Gastrocnemius medialis (tissue), 4 donors: ENCODE measurements at regions of chr2 and their contacts with region 1.

Region 1: GRCh38 chr2:97995734-97996624 is at the start of gene TMEM131:
- DNase-seq: peak; percentile 88 to 91
- ATAC-seq: peak; percentile 91 to 92
- H3K4me3 ChIP-seq: peak within 1 kb of the TSS; percentile 72 to 97 (median 80)
- H3K27ac ChIP-seq: peak within 1 kb of the TSS; percentile 90 to 100 (median 96)
- H3K4me1 ChIP-seq: peaks cover 36 to 44% of the 10 kb centered on the region in 2 donors
- H3K27me3 ChIP-seq: no peaks in the 10 kb centered on the region
- CTCF ChIP-seq: no peak
- POLR2A ChIP-seq: peak; percentile 68 to 82
- total RNA-seq, gene TMEM131: 10.3 to 39.2 (median 20.0) TPM

Region 2: GRCh38 chr2:97870396-97870843 is 125.6 kb before region 1 on chr2:
- in situ Hi-C with region 1: no loop called
- intact Hi-C with region 1: loop called (anchors 2 kb)
- DNase-seq: peak; percentile 60 to 63
- ATAC-seq: peak; percentile 85 to 90
- H3K4me3 ChIP-seq: peak overlapping the region in 3 of 4 donors; percentile 16 to 31 (median 30)
- H3K27ac ChIP-seq: peak overlapping the region; percentile 88 to 95 (median 92)
- H3K4me1 ChIP-seq: peaks cover 58 to 65% of the 10 kb centered on the region in 2 donors
- H3K27me3 ChIP-seq: no peaks in the 10 kb centered on the region
- CTCF ChIP-seq: no peak
- POLR2A ChIP-seq: peak in 1 of 2 donors; percentile 18

Region 3: GRCh38 chr2:98036349-98037000 is 40.5 kb after region 1 on chr2:
- in situ Hi-C with region 1: no loop called
- intact Hi-C with region 1: loop called (anchors 1 kb)
- DNase-seq: peak; percentile 86 to 90
- ATAC-seq: peak; percentile 94
- H3K4me3 ChIP-seq: peak overlapping the region in 1 of 4 donors; percentile 27
- H3K27ac ChIP-seq: peak overlapping the region; percentile 67 to 77 (median 72)
- H3K4me1 ChIP-seq: peaks cover 39 to 40% of the 10 kb centered on the region in 2 donors
- H3K27me3 ChIP-seq: no peaks in the 10 kb centered on the region
- CTCF ChIP-seq: no peak
- POLR2A ChIP-seq: no peak

Region 4: GRCh38 chr2:98058321-98058975 is 62.5 kb after region 1 on chr2:
- in situ Hi-C with region 1: no loop called
- intact Hi-C with region 1: no loop called
- DNase-seq: no peak
- ATAC-seq: no peak
- H3K4me3 ChIP-seq: no peak overlapping the region
- H3K27ac ChIP-seq: no peak overlapping the region
- H3K4me1 ChIP-seq: peaks cover 0 to under 1% of the 10 kb centered on the region in 2 donors
- H3K27me3 ChIP-seq: no peaks in the 10 kb centered on the region
- CTCF ChIP-seq: no peak
- POLR2A ChIP-seq: no peak

Region 5: DNA sequence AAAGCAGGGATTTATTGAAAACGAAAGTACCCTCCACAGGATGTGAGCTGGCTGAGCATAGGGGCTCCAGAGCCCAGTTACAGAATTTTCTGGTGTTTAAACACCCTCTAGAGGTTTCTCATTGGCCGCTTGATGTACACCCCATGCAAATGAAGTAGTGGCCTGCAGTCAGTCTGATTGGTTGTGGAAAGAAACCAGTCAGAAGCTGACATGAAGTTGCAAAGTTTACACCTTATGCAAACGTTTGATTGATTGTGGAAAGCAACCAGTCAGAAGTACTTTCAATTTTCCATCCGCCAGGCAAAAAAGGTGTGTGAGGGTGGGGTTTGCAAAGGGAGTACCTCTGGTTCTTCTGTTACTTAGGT is 153.3 kb after region 1 on chr2:
- in situ Hi-C with region 1: no loop called
- intact Hi-C with region 1: no loop called
- DNase-seq: no peak
- ATAC-seq: peak; percentile 33 to 41
- H3K4me3 ChIP-seq: peak overlapping the region in 3 of 4 donors; percentile 4 to 45 (median 19)
- H3K27ac ChIP-seq: peak overlapping the region in 2 of 4 donors; percentile 35 to 55
- H3K4me1 ChIP-seq: peaks cover 8 to 9% of the 10 kb centered on the region in 2 donors
- H3K27me3 ChIP-seq: no peaks in the 10 kb centered on the region
- CTCF ChIP-seq: no peak
- POLR2A ChIP-seq: no peak

Region 6: GRCh38 chr2:98394595-98395153 is 398.7 kb after region 1 on chr2:
- in situ Hi-C with region 1: no loop called
- intact Hi-C with region 1: no loop called
- DNase-seq: no peak
- ATAC-seq: no peak
- H3K4me3 ChIP-seq: no peak overlapping the region
- H3K27ac ChIP-seq: no peak overlapping the region
- H3K4me1 ChIP-seq: no peaks in the 10 kb centered on the region
- H3K27me3 ChIP-seq: peaks cover 0 to 3% (median 0%) of the 10 kb centered on the region in 3 donors
- CTCF ChIP-seq: no peak
- POLR2A ChIP-seq: no peak